ENCODE measurements at regions of chr16 and their contacts with region 1.

Region 1: DNA sequence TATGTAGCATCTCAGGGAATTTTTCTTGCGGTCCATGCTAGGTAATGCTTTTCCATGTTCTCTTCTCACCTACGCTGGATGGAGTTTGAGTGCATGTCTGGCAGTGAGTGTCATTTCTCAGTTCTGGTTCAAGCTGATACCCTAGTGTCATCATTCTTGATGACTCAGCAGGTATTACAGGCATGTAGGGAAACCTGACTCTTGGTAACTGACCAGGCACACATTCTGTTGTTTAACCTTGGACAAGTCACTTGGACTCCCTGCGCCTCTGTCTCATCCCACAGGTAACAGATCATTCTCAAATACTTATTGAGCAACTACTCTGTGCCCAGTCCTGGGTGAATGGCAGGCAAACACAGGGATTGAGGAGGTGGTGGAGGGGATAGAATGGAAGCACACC is 6.8 kb upstream of the RBFOX1 start:
- DNase-seq: no peak
- ATAC-seq: no peak
- H3K4me3 ChIP-seq: no peak overlapping the region
- H3K27ac ChIP-seq: no peak overlapping the region
- H3K4me1 ChIP-seq: no peaks in the 10 kb centered on the region
- H3K27me3 ChIP-seq: no peaks in the 10 kb centered on the region
- CTCF ChIP-seq: no peak

Region 2: DNA sequence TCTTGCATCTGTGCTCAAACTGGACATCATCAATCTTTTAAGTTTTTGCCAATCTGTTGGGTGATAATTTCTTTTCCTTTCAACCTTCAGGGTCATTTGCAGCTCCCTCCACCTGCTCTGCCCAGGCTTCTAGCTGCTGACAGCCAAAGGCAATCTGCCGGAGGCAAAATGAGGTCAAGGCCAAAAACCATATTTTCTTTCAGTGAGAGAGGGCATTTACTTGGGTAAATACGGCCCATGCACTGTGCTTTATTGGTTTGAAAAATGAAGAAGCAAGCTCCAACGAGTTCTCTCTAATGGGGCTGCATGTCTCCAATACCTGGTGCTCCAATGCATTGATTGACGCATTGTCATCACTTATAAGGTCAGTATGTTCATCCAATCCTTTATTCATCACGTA is 29.9 kb after region 1 on chr16:
- intact Hi-C with region 1: loop called (anchors 2 kb)
- DNase-seq: no peak
- ATAC-seq: no peak
- H3K4me3 ChIP-seq: no peak overlapping the region
- H3K27ac ChIP-seq: no peak overlapping the region
- H3K4me1 ChIP-seq: no peaks in the 10 kb centered on the region
- H3K27me3 ChIP-seq: no peaks in the 10 kb centered on the region
- CTCF ChIP-seq: no peak

Measured in upper lobe of right lung (tissue), 1 donor.